Calu3 (cell line): ENCODE measurements at regions of chr5 and their contacts with region 1.

Region 1: GRCh38 chr5:133423618-133424282 is 188.6 kb downstream of the FSTL4 start:
- DNase-seq: peak; percentile 85
- H3K4me3 Mint-ChIP-seq: no peak overlapping the region
- H3K27ac Mint-ChIP-seq: no peak overlapping the region
- H3K4me1 Mint-ChIP-seq: peaks cover 8% of the 10 kb centered on the region
- H3K27me3 Mint-ChIP-seq: peaks cover 72% of the 10 kb centered on the region
- CTCF ChIP-seq: peak; percentile 96

Region 2: GRCh38 chr5:133440467-133441115 is 16.8 kb after region 1 on chr5:
- CTCF ChIA-PET with region 1: interaction called, 17 read pairs
- intact Hi-C with region 1: no loop called
- DNase-seq: no peak
- H3K4me3 Mint-ChIP-seq: no peak overlapping the region
- H3K27ac Mint-ChIP-seq: no peak overlapping the region
- H3K4me1 Mint-ChIP-seq: no peaks in the 10 kb centered on the region
- H3K27me3 Mint-ChIP-seq: peaks cover 73% of the 10 kb centered on the region
- CTCF ChIP-seq: no peak

Region 3: GRCh38 chr5:133662578-133662977 is 238.8 kb after region 1 on chr5:
- CTCF ChIA-PET with region 1: no interaction called
- intact Hi-C with region 1: no loop called
- DNase-seq: no peak
- H3K4me3 Mint-ChIP-seq: no peak overlapping the region
- H3K27ac Mint-ChIP-seq: no peak overlapping the region
- H3K4me1 Mint-ChIP-seq: no peaks in the 10 kb centered on the region
- H3K27me3 Mint-ChIP-seq: peaks cover 55% of the 10 kb centered on the region
- CTCF ChIP-seq: no peak

Region 4: DNA sequence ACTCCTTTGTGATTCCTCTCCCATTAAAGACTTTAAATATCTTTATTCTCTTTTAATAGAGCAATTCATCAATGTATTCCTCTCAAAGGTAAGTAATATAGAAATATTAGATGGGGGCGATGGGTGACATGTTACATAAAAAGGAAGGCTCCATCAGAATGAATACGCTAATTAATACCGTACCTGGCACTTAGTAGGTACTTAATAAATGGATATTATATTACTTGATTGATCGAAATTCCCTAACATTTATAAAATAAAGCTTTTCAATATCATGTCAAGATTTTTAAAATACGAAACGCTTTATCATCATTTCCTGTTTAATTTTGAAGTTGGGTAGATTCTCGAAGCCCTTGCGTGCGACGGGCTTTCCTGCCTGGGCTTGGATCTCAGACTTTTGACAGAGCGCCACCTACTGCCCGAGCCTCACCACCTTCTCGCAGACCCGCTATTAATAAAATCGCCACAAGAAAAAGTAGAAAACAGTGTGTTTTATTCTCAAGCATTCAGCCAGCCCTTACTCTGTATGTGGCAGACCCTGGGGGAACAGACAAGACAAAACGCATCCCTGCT is 445.3 kb after region 1 on chr5:
- CTCF ChIA-PET with region 1: interaction called, 4 read pairs
- intact Hi-C with region 1: loop called (anchors 10 kb)
- DNase-seq: peak; percentile 84
- H3K4me3 Mint-ChIP-seq: no peak overlapping the region
- H3K27ac Mint-ChIP-seq: no peak overlapping the region
- H3K4me1 Mint-ChIP-seq: no peaks in the 10 kb centered on the region
- H3K27me3 Mint-ChIP-seq: peaks cover 63% of the 10 kb centered on the region
- CTCF ChIP-seq: peak; percentile 81

Region 5: DNA sequence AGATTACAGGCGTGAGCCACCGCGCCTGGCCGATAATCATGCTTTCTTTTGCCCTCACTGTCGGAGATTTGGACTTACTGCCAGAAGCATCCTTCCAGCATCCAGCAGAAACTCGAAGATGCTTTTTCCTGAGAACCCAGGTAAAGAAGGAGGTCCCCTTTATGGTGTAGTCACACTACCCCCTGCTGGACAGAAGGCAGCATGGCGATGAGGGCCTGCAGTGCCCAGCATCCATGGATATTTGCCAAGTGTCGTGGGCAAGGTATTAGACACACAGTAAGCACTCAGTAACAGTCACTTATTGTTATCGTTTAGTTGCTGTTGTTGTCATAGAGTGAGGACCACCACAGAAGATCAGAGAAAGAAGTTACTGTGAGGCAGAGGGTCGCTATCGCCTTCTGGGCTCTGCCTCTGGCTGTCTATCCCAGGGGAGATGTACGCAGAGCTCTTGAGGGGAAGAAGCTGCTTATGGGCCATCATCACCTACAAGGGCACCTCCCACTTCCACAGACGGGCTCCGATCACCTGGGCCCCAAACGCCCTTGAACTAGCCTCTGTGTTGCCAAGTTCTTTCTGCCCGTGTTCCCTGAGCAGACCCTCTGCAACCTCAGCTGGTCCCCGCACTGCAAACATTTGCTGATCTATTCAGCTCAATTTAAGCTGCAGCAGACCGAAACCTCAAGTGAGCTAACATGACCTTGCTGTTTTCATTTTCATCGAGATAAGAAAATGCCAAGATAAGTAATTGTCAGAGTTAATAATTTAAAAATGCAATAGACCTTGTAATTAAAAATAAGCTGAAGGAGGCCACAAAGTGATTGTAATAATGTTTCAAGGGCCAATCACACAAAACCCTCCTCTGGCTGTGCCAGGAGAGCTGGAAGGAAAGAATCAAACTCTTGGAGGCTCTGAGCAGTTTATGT is 520.8 kb after region 1 on chr5:
- CTCF ChIA-PET with region 1: interaction called, 6 read pairs
- intact Hi-C with region 1: loop called (anchors 5 kb)
- DNase-seq: peak; percentile 81
- H3K4me3 Mint-ChIP-seq: no peak overlapping the region
- H3K27ac Mint-ChIP-seq: no peak overlapping the region
- H3K4me1 Mint-ChIP-seq: peaks cover 12% of the 10 kb centered on the region
- H3K27me3 Mint-ChIP-seq: peaks cover 27% of the 10 kb centered on the region
- CTCF ChIP-seq: peak; percentile 78